ENCODE measurements at regions of chr2 and their contacts with region 1.

Region 1: DNA sequence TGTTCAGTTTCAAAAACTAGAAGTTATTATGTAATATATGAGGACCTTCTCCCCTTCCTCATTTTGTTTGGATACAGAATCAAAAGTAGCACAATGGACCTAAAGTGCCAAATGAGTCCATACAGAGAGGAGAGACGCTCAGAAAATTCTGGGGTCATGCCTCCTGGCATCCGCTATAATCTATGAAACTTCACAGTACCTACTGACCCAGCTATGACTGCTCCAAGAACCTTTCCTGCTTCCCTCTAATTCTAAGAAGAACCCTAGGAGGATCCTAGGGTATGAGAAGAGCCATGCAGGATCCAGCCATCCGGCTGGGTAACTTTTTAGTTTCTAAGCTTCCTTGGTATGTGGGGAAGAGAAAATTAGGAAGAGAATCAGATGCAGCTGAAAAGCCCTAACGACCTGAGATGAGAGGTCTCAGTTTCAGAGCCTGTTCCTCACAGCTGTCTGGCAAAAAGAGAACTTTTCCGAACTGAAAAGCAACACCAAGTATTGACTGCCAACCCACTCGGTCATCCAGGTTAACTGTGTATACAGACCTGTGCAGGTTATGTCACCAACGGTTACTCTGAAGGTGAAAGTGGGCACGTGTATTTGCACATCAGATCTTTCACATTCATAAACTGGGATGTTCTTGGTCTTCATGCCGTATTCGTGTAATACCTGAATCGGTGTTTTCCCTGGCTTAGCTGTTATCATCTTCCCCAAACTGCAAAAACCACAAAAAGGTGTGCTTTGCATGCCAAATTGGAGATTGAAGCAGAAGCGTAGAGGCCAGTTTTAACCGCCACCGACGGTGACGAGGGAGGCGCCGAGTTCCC is 1.1 kb downstream of the PRKRA start:
- DNase-seq: no peak
- H3K4me3 ChIP-seq: peak overlapping the region; percentile 78
- CTCF ChIP-seq: no peak

Region 2: GRCh38 chr2:178484245-178485041 is 34.5 kb after region 1 on chr2:
- in situ Hi-C with region 1: no loop called
- DNase-seq: no peak
- H3K4me3 ChIP-seq: no peak overlapping the region
- CTCF ChIP-seq: no peak

Region 3: GRCh38 chr2:178506524-178506923 is 56.6 kb after region 1 on chr2:
- in situ Hi-C with region 1: loop called (anchors 10 kb)
- DNase-seq: no peak
- H3K4me3 ChIP-seq: no peak overlapping the region
- CTCF ChIP-seq: no peak